Colonic mucosa (tissue), 4 donors: ENCODE measurements at regions of chr15 and their contacts with region 1.

Region 1: GRCh38 chr15:45050587-45050986 is 27.6 kb downstream of the SORD start:
- DNase-seq: no peak
- H3K4me3 ChIP-seq: no peak overlapping the region
- H3K27ac ChIP-seq: no peak overlapping the region
- H3K4me1 ChIP-seq: no peaks in the 10 kb centered on the region
- H3K27me3 ChIP-seq: no peaks in the 10 kb centered on the region
- CTCF ChIP-seq: no peak

Region 2: GRCh38 chr15:45118131-45118588 is 67.6 kb after region 1 on chr15:
- intact Hi-C with region 1: loop called (anchors 5 kb)
- DNase-seq: peak; percentile 92
- H3K4me3 ChIP-seq: no peak overlapping the region
- H3K27ac ChIP-seq: no peak overlapping the region
- H3K4me1 ChIP-seq: peaks cover 3% of the 10 kb centered on the region
- H3K27me3 ChIP-seq: peaks cover 40% of the 10 kb centered on the region
- CTCF ChIP-seq: peak; percentile 97